ENCODE measurements at regions of chr6 and their contacts with region 1.

Region 1: GRCh38 chr6:142566628-142567396 is 265.0 kb downstream of the ADGRG6 start:
- DNase-seq: no peak
- H3K4me3 ChIP-seq: no peak overlapping the region
- CTCF ChIP-seq: peak; percentile 85

Region 2: DNA sequence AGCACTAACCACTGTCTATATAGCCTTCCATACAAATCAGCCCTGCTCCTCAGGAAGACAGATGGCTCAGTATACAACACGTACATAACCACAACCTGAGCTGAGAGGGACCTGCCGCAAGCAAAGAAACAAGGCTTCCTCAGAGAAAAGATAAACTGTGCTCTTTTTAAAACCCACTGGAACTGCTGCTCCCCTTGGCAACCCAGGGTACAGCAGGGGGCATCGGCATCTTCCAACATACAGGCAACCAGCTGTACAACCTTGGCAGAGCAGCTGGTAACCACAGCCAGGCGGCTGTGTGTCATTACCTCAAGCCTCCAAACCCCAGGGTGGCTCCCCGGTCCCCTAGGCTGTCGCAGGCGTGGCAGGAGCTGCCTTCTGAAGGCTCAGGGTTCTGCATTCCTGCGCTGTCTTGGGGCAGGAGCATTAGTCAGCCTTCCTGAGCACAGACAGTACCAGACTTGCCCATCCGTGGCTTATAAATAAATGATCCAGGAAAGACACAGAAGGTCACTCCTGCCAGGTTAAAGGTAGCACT is 15.5 kb before region 1 on chr6:
- CTCF ChIA-PET with region 1: interaction called, 21 read pairs
- POLR2A ChIA-PET with region 1: no interaction called
- DNase-seq: no peak
- H3K4me3 ChIP-seq: no peak overlapping the region
- CTCF ChIP-seq: no peak

Region 3: GRCh38 chr6:142642651-142643050 is 75.8 kb after region 1 on chr6:
- CTCF ChIA-PET with region 1: no interaction called
- POLR2A ChIA-PET with region 1: no interaction called
- DNase-seq: no peak
- H3K4me3 ChIP-seq: no peak overlapping the region
- CTCF ChIP-seq: no peak

Measured in AG04449 (cell line).